CD4-positive, alpha-beta T cell (primary cell): ENCODE measurements at regions of chr11 and their contacts with region 1.

Region 1: DNA sequence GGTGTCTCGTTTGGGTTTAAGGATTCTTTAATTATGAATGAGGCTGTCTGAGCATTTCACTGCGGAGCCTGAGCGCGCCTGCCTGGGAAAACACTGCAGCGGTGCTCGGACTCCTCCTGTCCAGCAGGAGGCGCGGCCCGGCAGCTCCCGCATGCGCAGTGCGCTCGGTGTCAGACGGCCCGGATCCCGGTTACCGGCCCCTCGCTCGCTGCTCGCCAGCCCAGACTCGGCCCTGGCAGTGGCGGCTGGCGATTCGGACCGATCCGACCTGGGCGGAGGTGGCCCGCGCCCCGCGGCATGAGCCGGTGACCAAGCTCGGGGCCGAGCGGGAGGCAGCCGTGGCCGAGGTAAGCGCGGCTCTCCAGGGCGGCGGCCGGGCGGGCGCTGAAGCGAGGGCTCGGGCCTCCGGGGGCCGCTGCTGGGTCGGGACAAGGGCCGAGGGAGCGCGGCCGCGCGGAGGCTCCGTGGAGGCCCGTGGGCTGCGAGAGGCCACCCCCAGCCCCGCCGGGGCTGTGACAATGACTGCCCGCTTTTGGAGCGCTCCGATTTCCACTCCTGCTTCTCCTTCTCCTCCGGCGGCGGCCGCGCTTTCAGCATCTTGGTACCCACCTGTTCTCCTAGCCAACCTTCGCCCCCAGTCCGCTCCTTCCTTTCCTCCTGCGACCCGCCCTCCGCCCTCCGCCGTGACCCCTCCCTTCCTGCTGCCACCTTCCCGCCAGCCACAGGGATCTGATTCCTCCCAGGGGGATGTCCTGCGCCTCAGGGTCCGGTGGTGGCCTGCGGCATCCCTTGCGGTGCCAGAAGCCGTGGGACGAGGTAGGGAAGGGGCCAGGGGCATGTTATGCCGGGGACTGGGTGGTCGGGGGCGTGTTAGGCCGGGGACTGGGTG is at the start of gene EXT2:
- DNase-seq: peak; percentile 75 to 92 (median 82)
- ATAC-seq: peak; percentile 93
- H3K4me3 ChIP-seq: peak within 1 kb of the TSS; percentile 82
- H3K4me3 Mint-ChIP-seq: peak within 1 kb of the TSS; percentile 88
- H3K27ac ChIP-seq: no peak within 1 kb of the TSS
- H3K27ac Mint-ChIP-seq: peak within 1 kb of the TSS; percentile 57
- H3K4me1 ChIP-seq: peaks cover 18% of the 10 kb centered on the region
- H3K4me1 Mint-ChIP-seq: peaks cover 42% of the 10 kb centered on the region
- H3K27me3 ChIP-seq: no peaks in the 10 kb centered on the region
- H3K27me3 Mint-ChIP-seq: no peaks in the 10 kb centered on the region
- CTCF ChIP-seq: peak; percentile 94
- total RNA-seq, gene EXT2: 17.1 to 17.5 TPM

Region 2: DNA sequence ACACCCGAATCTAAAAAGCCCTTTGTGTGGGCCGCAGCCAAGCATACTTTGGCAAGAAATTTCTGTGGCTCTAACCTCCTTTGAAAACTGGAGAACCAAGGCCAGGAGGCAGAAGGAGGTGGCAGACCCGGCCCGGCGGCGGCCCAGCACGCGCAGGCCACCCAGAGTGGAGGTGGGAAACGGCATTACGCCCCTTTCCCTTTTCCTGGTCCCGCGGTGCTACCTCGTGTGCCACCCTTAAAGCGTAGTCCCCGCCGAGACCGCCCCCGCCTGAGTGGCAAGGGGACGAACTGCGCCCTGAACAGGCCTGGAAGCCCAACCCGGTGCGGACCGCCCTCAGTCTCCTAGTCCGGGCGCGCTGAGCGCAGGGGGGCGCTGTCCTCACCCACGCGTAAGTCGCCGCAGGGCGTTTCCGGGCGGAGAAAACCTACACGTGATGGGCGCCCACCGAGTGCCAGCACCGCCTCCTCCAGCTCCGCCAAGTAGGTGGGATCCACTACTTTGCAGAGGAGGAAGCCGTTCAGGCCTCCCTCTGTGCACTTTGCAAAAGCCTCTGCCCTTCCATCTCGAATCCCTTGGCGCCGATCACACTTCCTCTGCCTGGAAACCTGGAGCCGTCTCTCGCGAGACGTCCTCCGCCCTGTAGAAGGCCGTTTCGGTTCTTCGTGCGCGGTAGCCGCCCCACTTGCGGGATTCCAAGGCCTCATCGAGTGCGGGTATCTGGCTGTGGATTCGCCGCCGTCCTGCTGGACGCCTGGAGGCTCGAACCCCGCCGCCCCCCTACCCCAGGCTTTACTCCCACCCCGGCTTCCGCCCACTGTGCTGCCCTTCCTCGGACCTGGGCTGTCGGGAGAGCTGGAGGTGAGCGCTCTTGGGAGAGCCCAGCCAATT is 29.7 kb before region 1 on chr11 and contains the start of gene ACCS:
- CTCF ChIA-PET with region 1: interaction called, 20 read pairs
- POLR2A ChIA-PET with region 1: interaction called, 14 read pairs
- intact Hi-C with region 1: loop called (anchors 1 to 2 kb)
- DNase-seq: peak; percentile 75 to 96 (median 86)
- ATAC-seq: peak; percentile 95
- H3K4me3 ChIP-seq: peak within 1 kb of the TSS; percentile 90
- H3K4me3 Mint-ChIP-seq: peak within 1 kb of the TSS; percentile 89
- H3K27ac ChIP-seq: peak within 1 kb of the TSS; percentile 59 to 65
- H3K27ac Mint-ChIP-seq: peak within 1 kb of the TSS; percentile 88
- H3K4me1 ChIP-seq: peaks cover 20% of the 10 kb centered on the region
- H3K4me1 Mint-ChIP-seq: peaks cover 30% of the 10 kb centered on the region
- H3K27me3 ChIP-seq: no peaks in the 10 kb centered on the region
- H3K27me3 Mint-ChIP-seq: no peaks in the 10 kb centered on the region
- CTCF ChIP-seq: peak; percentile 90
- total RNA-seq, gene ACCS: 17.7 to 18.7 TPM

Region 3: GRCh38 chr11:44071157-44071556 is 24.6 kb before region 1 on chr11:
- CTCF ChIA-PET with region 1: interaction called, 20 read pairs
- POLR2A ChIA-PET with region 1: interaction called, 14 read pairs
- intact Hi-C with region 1: loop called (anchors 1 to 2 kb)
- DNase-seq: no peak
- ATAC-seq: no peak
- H3K4me3 ChIP-seq: no peak overlapping the region
- H3K4me3 Mint-ChIP-seq: no peak overlapping the region
- H3K27ac ChIP-seq: no peak overlapping the region
- H3K27ac Mint-ChIP-seq: no peak overlapping the region
- H3K4me1 ChIP-seq: peaks cover 9% of the 10 kb centered on the region
- H3K4me1 Mint-ChIP-seq: peaks cover 18% of the 10 kb centered on the region
- H3K27me3 ChIP-seq: no peaks in the 10 kb centered on the region
- H3K27me3 Mint-ChIP-seq: no peaks in the 10 kb centered on the region
- CTCF ChIP-seq: no peak

Region 4: GRCh38 chr11:44110231-44110679 is 14.5 kb after region 1 on chr11:
- CTCF ChIA-PET with region 1: interaction called, 34 read pairs
- POLR2A ChIA-PET with region 1: interaction called, 11 read pairs
- intact Hi-C with region 1: no loop called
- DNase-seq: peak; percentile 9 to 70 (median 36)
- ATAC-seq: peak; percentile 91
- H3K4me3 ChIP-seq: no peak overlapping the region
- H3K4me3 Mint-ChIP-seq: no peak overlapping the region
- H3K27ac ChIP-seq: no peak overlapping the region
- H3K27ac Mint-ChIP-seq: no peak overlapping the region
- H3K4me1 ChIP-seq: peaks cover 3% of the 10 kb centered on the region
- H3K4me1 Mint-ChIP-seq: peaks cover 9% of the 10 kb centered on the region
- H3K27me3 ChIP-seq: no peaks in the 10 kb centered on the region
- H3K27me3 Mint-ChIP-seq: no peaks in the 10 kb centered on the region
- CTCF ChIP-seq: peak; percentile 71

Region 5: DNA sequence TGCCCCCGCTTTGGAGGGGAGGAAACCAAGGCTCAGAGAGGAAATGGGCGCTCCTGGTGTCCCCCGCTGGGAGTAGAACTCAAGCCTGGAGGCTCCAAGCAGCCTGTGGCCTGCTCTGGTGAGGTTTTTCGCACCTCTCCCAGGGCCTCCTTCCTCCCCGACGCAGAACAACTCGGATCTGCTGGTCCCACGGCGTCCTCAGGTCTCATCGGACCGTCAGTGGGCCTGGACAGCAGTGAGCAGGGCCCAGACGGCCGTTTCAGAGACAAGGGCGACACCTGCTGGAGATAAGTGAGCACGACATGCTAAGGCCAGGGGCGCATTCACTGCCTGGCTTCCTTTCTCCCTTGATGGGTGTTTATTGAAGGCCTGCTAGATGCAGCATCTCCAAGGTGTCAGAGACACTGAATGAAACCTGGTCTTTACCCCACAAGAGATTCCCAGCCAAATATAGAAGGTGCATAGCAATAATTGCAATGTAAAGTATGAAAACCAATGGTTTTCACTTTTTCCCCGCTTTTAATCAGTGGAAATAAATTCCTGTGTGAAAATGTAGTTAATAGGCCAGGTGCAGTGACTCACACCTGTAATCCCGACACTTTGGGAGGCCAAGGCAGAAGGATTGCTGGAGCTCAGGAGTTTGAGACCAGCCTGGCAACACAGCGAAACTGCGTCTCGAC is 442.8 kb after region 1 on chr11:
- CTCF ChIA-PET with region 1: no interaction called
- POLR2A ChIA-PET with region 1: no interaction called
- intact Hi-C with region 1: loop called (anchors 1 to 5 kb)
- DNase-seq: peak; percentile 39 to 83 (median 64)
- ATAC-seq: peak; percentile 88
- H3K4me3 ChIP-seq: no peak overlapping the region
- H3K4me3 Mint-ChIP-seq: no peak overlapping the region
- H3K27ac ChIP-seq: no peak overlapping the region
- H3K27ac Mint-ChIP-seq: no peak overlapping the region
- H3K4me1 ChIP-seq: peaks cover 5% of the 10 kb centered on the region
- H3K4me1 Mint-ChIP-seq: no peaks in the 10 kb centered on the region
- H3K27me3 ChIP-seq: peaks cover 0 to 2% of the 10 kb centered on the region in 2 experiments
- H3K27me3 Mint-ChIP-seq: no peaks in the 10 kb centered on the region
- CTCF ChIP-seq: peak; percentile 96

Region 6: DNA sequence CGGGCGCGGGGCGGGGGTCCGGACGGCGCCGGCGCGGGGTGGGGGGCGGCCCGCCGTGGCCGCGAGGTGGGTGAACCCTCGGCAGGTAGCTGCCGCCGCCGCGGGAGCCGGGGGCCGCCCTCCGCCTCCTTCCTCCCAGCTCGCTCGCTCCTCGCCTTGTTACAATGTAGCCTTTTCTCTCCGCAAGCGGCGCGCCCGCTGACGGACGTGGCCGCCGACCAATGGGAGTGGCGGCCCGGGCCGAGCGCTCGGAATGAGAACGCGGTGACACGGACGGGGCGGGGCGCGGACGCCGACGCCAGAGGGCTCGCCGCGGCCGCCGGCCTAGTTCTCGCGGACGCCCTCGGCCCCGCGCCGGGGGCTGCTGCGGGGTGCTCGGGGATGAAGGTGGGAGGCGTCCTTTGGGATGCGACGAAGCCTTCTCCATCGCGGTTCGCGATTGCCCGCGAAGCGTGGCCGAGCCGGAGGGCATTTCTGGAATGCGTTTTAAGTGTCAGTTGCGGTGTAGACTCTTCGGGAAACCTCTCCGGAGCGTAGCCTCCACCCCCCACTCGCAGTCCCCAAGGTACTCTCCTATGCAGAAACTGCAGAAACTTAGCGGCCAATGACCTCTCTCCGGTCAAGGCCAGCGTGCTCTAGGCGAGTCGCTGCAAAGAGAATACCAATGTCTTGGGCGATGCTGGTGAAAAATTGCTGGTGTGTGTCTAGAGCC is 1051.4 kb after region 1 on chr11:
- CTCF ChIA-PET with region 1: no interaction called
- POLR2A ChIA-PET with region 1: no interaction called
- intact Hi-C with region 1: loop called in 1 of 2 experiments (anchors 10 kb)
- DNase-seq: peak; percentile 82 to 96 (median 91)
- ATAC-seq: peak; percentile 97
- H3K4me3 ChIP-seq: peak overlapping the region; percentile 72
- H3K4me3 Mint-ChIP-seq: peak overlapping the region; percentile 96
- H3K27ac ChIP-seq: peak overlapping the region; percentile 37 to 49
- H3K27ac Mint-ChIP-seq: peak overlapping the region; percentile 70
- H3K4me1 ChIP-seq: peaks cover 23% of the 10 kb centered on the region
- H3K4me1 Mint-ChIP-seq: peaks cover 39% of the 10 kb centered on the region
- H3K27me3 ChIP-seq: peaks cover 0 to 10% of the 10 kb centered on the region in 2 experiments
- H3K27me3 Mint-ChIP-seq: peaks cover 24% of the 10 kb centered on the region
- CTCF ChIP-seq: no peak